Activated B cell treated with CpG ODN at 0.5 μM for 24 hours (primary cell): ENCODE measurements at regions of chr2 and their contacts with region 1.

Region 1: DNA sequence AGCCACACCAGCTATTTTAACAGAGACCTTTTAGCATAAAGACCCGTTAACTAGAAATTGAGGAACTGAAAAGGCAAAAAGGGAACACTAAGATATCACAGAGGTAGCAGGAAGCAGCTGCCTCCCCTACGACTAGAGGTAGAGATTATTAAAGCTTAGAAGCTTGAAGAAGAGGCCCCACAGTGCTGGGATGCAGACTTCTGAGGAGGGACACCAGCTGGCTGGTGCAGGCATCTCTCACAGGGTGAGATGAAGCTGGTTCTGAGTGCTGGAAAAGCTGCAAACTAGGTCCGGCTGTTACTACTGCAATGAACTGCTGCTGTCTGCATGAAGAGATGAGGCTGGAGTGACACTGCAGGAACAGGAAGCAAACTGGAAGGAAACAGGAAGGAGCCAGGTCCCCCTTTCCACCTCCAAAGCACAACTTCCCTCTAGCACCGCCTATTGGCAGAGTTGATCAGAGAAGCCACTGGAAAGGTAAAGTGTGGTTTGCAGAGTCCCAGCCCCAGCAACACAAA is 61.2 kb upstream of the MRPS9 start:
- DNase-seq: peak; percentile 52
- ATAC-seq: peak; percentile 95
- H3K4me3 Mint-ChIP-seq: peak overlapping the region; percentile 77
- H3K27ac Mint-ChIP-seq: peak overlapping the region; percentile 89
- H3K4me1 Mint-ChIP-seq: peaks cover 37% of the 10 kb centered on the region
- H3K27me3 Mint-ChIP-seq: no peaks in the 10 kb centered on the region
- CTCF ChIP-seq: no peak

Region 2: DNA sequence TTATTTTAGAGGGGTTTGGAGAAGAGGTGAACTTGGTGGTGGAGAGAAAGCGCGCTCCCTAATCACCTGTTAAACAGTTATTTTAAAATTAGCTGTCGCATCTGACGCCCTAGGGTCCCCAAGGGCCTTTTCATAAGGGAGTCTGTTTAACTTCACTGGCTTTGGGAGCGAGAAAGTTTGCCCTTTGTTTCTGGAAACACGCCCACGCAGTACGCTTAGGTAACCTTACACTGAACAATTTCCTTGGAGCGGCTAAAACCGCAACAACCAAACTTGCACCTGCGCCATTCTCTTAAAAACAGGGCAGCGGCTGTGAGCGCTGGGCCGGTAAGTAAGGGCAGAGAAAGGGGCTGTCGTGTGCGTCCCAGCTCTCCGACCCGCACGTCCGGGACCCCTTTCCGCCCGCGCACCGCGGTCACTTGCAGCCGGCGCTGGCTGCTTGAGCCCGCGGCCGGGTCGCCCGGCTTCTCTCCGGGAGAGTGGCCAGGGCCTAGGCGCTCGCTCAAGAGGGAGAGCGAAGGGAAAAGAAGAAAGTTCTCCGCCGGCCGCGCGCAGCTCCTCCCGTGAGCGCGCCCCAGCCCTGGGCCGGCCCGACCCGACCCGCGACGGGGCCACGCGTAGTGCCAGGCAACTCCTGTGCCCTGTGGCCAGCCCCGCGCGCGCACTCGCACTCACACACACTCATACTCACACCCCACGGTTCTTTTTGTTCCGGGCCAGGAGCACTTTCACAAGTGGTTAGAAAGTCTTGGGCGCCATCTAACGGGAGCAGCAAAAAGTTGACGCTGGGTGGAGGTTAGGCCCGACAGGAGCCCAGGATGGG is 103.6 kb before region 1 on chr2:
- CTCF ChIA-PET with region 1: interaction called, 6 read pairs
- POLR2A ChIA-PET with region 1: no interaction called
- intact Hi-C with region 1: loop called (anchors 2 kb)
- DNase-seq: peak; percentile 50
- ATAC-seq: peak; percentile 89
- H3K4me3 Mint-ChIP-seq: peak overlapping the region; percentile 80
- H3K27ac Mint-ChIP-seq: no peak overlapping the region
- H3K4me1 Mint-ChIP-seq: peaks cover 21% of the 10 kb centered on the region
- H3K27me3 Mint-ChIP-seq: peaks cover 34% of the 10 kb centered on the region
- CTCF ChIP-seq: no peak

Region 3: DNA sequence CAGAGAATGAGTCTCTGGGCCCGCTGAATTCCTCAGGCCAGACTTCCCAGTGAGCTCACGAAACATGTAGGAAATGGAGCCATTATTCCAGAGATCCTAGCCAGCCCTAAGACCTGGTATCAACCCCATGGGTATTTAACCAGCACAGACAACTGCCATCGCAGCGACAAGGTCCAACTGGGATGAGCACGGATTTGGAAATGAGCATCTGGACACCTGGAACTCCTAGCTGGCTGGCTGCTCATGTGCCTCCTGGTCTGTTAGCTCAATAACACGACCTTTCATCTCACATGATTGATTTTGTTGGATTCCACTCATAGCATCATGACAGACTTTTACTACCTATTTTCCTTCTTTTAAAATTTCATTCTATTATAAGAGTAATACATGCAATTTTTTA is 71.8 kb before region 1 on chr2:
- CTCF ChIA-PET with region 1: no interaction called
- POLR2A ChIA-PET with region 1: no interaction called
- intact Hi-C with region 1: no loop called
- DNase-seq: no peak
- ATAC-seq: no peak
- H3K4me3 Mint-ChIP-seq: no peak overlapping the region
- H3K27ac Mint-ChIP-seq: no peak overlapping the region
- H3K4me1 Mint-ChIP-seq: no peaks in the 10 kb centered on the region
- H3K27me3 Mint-ChIP-seq: peaks cover 8% of the 10 kb centered on the region
- CTCF ChIP-seq: no peak

Region 4: GRCh38 chr2:104923665-104924064 is 53.0 kb before region 1 on chr2:
- CTCF ChIA-PET with region 1: interaction called, 10 read pairs
- POLR2A ChIA-PET with region 1: no interaction called
- intact Hi-C with region 1: no loop called
- DNase-seq: no peak
- ATAC-seq: no peak
- H3K4me3 Mint-ChIP-seq: no peak overlapping the region
- H3K27ac Mint-ChIP-seq: no peak overlapping the region
- H3K4me1 Mint-ChIP-seq: peaks cover 4% of the 10 kb centered on the region
- H3K27me3 Mint-ChIP-seq: no peaks in the 10 kb centered on the region
- CTCF ChIP-seq: no peak

Region 5: DNA sequence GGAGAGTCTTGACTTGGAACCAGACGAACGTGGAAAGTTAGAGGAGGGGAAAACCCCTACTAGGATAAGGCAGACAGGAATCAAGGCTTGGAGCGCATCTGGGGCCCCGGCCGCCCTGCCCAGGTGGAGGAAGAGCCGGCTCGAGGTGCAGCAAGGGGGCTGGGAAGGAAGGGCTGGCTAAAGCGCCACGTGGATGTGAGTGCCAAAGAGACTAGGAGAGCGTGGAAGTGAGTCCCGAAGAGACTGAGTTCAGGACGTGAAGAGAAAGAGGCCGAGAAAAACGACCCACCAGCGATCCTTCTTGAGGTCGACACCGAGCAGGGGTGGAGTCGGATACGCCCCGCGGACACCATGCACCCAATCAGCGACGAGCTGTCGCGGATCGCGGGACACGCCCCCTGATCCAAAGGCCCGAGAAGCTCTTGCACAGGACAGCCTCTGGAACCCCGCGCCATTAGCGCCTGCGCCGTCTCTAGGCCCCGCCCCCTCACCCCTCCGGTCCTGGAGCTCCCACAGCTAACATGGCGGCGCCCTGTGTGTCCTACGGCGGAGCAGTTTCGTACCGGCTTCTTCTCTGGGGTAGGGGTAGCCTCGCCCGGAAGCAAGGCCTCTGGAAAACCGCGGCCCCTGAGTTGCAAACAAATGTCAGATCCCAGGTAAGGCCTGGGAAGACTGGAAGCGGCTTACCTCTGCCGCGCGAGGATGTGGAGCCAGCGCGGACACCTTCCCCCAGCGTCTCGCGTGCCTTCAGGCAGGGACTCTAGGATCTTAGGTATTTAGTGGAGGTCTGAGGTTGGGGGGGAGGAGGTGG is 61.1 kb after region 1 on chr2 and contains the start of gene MRPS9:
- CTCF ChIA-PET with region 1: interaction called, 8 read pairs
- POLR2A ChIA-PET with region 1: interaction called, 12 read pairs
- intact Hi-C with region 1: loop called (anchors 1 kb)
- DNase-seq: peak; percentile 92
- ATAC-seq: peak; percentile 98
- H3K4me3 Mint-ChIP-seq: peak within 1 kb of the TSS; percentile 99
- H3K27ac Mint-ChIP-seq: peak within 1 kb of the TSS; percentile 95
- H3K4me1 Mint-ChIP-seq: peaks cover 36% of the 10 kb centered on the region
- H3K27me3 Mint-ChIP-seq: no peaks in the 10 kb centered on the region
- CTCF ChIP-seq: no peak
- total RNA-seq, gene MRPS9: 26.5 and 29.1 TPM in 2 replicates

Region 6: DNA sequence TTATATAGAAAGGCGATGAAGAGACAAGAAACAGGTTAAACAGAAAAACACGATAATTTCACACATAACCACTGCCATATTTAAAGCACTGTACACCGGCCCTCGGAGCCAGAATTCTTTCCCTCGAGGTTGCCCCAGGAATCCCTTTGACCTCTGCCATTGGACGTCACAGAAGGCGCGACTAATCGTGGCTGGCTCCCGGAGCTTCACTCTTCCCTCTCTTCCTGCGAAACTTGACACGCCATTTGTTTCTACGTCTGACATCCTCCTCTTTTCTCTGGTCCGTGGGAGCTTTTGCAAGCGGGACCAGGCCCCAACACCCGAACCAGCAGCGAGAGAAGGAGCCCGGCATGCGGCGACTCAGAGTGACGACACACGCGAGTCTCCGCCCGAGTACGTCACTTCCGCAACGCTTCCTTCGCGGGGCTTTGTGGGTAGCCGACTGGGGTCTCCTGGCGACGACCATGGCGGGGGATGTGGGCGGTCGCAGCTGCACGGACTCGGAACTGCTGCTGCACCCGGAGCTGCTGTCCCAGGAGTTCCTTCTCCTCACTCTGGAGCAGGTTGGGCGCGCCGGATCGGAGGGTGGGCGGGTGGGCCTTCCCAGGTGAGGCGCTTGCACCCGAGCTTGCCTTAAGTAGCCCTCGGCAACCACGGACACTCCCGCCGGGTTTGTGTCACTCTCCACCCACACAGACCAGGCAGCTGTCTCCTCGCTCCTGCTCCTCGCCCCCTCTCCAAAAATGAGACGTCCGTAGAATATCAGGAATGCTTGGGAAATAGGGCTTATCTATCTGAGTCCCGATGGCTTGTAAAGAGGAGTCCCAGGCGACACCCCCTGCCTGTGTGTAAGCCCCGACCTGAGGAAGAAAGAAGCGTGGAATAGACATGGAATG is 360.7 kb after region 1 on chr2 and contains the start of gene C2orf49:
- CTCF ChIA-PET with region 1: no interaction called
- POLR2A ChIA-PET with region 1: no interaction called
- intact Hi-C with region 1: loop called (anchors 5 kb)
- DNase-seq: peak; percentile 89
- ATAC-seq: peak; percentile 93
- H3K4me3 Mint-ChIP-seq: peak within 1 kb of the TSS; percentile 100
- H3K27ac Mint-ChIP-seq: peak within 1 kb of the TSS; percentile 100
- H3K4me1 Mint-ChIP-seq: peaks cover 32% of the 10 kb centered on the region
- H3K27me3 Mint-ChIP-seq: no peaks in the 10 kb centered on the region
- CTCF ChIP-seq: no peak
- total RNA-seq, gene C2orf49: 20.0 and 23.8 TPM in 2 replicates